ENCODE measurements at regions of chr19 and their contacts with region 1.

Region 1: GRCh38 chr19:12946092-12946721 is 545 bp downstream of the RAD23A start:
- DNase-seq: peak; percentile 82
- ATAC-seq: peak; percentile 76
- H3K4me3 ChIP-seq: peak overlapping the region; percentile 76
- H3K27ac ChIP-seq: peak overlapping the region; percentile 86
- H3K4me1 ChIP-seq: peaks cover 18% of the 10 kb centered on the region; the same call in 1 of the 2 replicates
- H3K27me3 ChIP-seq: no peaks in the 10 kb centered on the region
- CTCF ChIP-seq: no peak

Region 2: GRCh38 chr19:11155373-11156120 is 1790.7 kb before region 1 on chr19 and contains the start of gene SPC24:
- CTCF ChIA-PET with region 1: no interaction called
- POLR2A ChIA-PET with region 1: interaction called, 14 read pairs
- intact Hi-C with region 1: no loop called
- DNase-seq: peak; percentile 99
- ATAC-seq: peak; percentile 94
- H3K4me3 ChIP-seq: peak within 1 kb of the TSS; percentile 94
- H3K27ac ChIP-seq: peak within 1 kb of the TSS; percentile 35
- H3K4me1 ChIP-seq: peaks cover 28% of the 10 kb centered on the region
- H3K27me3 ChIP-seq: no peaks in the 10 kb centered on the region
- CTCF ChIP-seq: no peak
- total RNA-seq, gene SPC24: 136 and 142 TPM in 2 replicates

Region 3: GRCh38 chr19:13022859-13023636 is 76.8 kb after region 1 on chr19:
- CTCF ChIA-PET with region 1: no interaction called
- POLR2A ChIA-PET with region 1: no interaction called
- intact Hi-C with region 1: no loop called
- DNase-seq: peak; percentile 94
- ATAC-seq: peak; percentile 39
- H3K4me3 ChIP-seq: peak overlapping the region; percentile 82
- H3K27ac ChIP-seq: peak overlapping the region; percentile 68
- H3K4me1 ChIP-seq: peaks cover 67% of the 10 kb centered on the region
- H3K27me3 ChIP-seq: no peaks in the 10 kb centered on the region
- CTCF ChIP-seq: no peak

Region 4: GRCh38 chr19:13181747-13182388 is 235.7 kb after region 1 on chr19:
- CTCF ChIA-PET with region 1: no interaction called
- POLR2A ChIA-PET with region 1: interaction called, 20 read pairs
- intact Hi-C with region 1: no loop called
- DNase-seq: peak; percentile 66
- ATAC-seq: peak; percentile 85
- H3K4me3 ChIP-seq: no peak overlapping the region
- H3K27ac ChIP-seq: peak overlapping the region; percentile 16; the same call in 1 of the 2 replicates
- H3K4me1 ChIP-seq: peaks cover 8% of the 10 kb centered on the region
- H3K27me3 ChIP-seq: no peaks in the 10 kb centered on the region
- CTCF ChIP-seq: no peak